Activated B cell treated with CpG ODN at 0.5 μM for 24 hours (primary cell): ENCODE measurements at regions of chr19 and their contacts with region 1.

Region 1: DNA sequence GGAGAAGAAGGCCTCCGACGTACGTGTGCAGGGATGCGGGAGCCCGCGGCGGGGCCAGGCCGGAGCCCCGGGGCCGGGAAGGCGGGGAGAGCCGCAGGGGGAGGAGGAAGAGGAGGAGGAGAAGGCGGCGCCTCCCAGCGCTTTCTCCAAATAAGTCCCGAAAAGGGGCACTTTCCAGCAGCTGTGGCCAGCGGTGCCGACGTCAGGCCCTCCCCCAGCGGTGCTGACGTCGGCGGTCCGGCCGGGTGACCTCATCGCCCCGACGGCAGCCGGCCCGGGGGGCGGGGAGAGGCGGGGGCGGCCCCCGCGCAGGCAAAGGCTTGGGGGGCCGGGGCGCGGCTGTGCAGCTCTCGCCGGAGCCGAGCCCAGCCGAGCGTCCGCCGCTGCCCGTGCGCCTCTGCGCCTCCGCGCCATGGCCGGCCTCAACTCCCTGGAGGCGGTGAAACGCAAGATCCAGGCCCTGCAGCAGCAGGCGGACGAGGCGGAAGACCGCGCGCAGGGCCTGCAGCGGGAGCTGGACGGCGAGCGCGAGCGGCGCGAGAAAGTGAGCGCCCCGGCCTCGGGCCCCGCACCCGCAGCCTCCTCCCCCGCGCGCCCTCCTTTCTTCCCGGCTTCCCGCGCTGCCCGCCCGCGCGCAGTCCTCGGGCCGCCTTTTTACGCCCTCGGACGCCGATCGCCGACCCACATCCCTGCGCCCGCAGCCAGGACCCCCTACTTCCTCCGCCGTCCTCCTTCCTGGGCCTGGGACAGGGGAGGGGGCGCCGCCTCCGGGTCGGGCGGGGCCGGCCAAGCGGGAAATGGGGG is at the start of gene TPM4:
- DNase-seq: peak; percentile 77
- ATAC-seq: peak; percentile 53
- H3K4me3 Mint-ChIP-seq: peak within 1 kb of the TSS; percentile 90
- H3K27ac Mint-ChIP-seq: peak within 1 kb of the TSS; percentile 98
- H3K4me1 Mint-ChIP-seq: peaks cover 57% of the 10 kb centered on the region
- H3K27me3 Mint-ChIP-seq: no peaks in the 10 kb centered on the region
- CTCF ChIP-seq: no peak
- total RNA-seq, gene TPM4: 238 and 257 TPM in 2 replicates

Region 2: DNA sequence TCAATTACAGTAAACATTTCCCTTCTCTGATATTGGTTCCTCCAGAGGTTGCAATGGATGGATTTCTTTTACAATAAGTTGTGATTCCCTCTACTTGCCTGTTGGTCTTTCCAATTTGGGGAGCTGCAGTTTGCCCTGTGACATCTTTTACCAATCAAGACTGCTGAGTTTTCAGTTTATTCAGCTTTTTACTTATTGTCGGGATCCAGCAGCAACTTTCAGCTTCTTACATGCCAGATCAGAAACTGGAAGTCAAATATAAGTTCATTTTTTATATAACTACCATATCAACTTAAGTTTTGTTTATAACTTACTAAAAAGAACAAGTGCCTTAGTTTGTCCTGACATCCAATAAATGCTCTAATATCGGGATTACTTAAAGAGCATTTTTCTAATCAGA is 328.1 kb before region 1 on chr19:
- CTCF ChIA-PET with region 1: no interaction called
- POLR2A ChIA-PET with region 1: no interaction called
- intact Hi-C with region 1: no loop called
- DNase-seq: no peak
- ATAC-seq: no peak
- H3K4me3 Mint-ChIP-seq: no peak overlapping the region
- H3K27ac Mint-ChIP-seq: no peak overlapping the region
- H3K4me1 Mint-ChIP-seq: no peaks in the 10 kb centered on the region
- H3K27me3 Mint-ChIP-seq: peaks cover 41% of the 10 kb centered on the region
- CTCF ChIP-seq: no peak

Region 3: DNA sequence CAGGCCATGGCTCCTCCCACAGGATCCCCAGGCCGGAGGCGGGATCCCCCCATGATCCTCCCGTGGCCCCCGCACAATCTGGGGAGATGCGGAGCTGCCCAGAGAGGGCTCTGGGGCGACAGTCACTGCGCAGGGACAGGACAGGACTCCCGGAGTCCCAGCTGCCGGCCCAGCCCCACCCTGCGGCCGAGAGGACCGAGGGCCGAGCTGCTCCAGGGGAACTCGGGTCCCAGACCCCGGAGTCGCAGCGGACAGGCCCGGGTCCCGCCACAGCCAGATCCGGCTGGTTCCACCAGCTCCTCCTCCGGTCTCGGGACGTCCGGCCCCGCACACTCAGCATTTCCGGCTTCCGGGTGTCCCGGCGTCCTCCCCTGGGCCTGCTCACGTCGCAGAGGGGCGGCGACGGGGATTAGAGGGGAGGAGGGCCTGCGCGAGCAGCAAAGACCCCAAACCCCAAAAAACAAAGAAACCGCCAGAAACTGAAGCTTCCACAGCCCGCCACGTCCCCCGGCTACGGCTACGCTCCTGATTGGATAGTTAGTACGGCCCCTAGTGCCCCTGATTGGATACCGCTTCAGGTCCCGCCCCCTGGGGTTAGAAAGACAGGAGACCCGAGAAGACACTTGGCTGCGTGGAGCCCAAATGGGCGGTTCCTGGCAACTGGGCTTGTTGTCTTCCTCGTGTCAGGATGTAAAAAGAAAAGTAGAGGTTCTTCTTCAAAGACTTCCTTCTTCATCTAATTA is 239.6 kb before region 1 on chr19:
- CTCF ChIA-PET with region 1: no interaction called
- POLR2A ChIA-PET with region 1: interaction called, 8 read pairs
- intact Hi-C with region 1: loop called (anchors 10 kb)
- DNase-seq: peak; percentile 85
- ATAC-seq: peak; percentile 95
- H3K4me3 Mint-ChIP-seq: peak overlapping the region; percentile 92
- H3K27ac Mint-ChIP-seq: peak overlapping the region; percentile 95
- H3K4me1 Mint-ChIP-seq: peaks cover 15% of the 10 kb centered on the region
- H3K27me3 Mint-ChIP-seq: peaks cover 4% of the 10 kb centered on the region
- CTCF ChIP-seq: no peak

Region 4: GRCh38 chr19:16088351-16089009 is 12.1 kb after region 1 on chr19:
- CTCF ChIA-PET with region 1: interaction called, 7 read pairs
- POLR2A ChIA-PET with region 1: interaction called, 45 read pairs
- intact Hi-C with region 1: no loop called
- DNase-seq: no peak
- ATAC-seq: no peak
- H3K4me3 Mint-ChIP-seq: no peak overlapping the region
- H3K27ac Mint-ChIP-seq: no peak overlapping the region
- H3K4me1 Mint-ChIP-seq: peaks cover 22% of the 10 kb centered on the region
- H3K27me3 Mint-ChIP-seq: no peaks in the 10 kb centered on the region
- CTCF ChIP-seq: no peak

Region 5: GRCh38 chr19:16111160-16111908 is 35.0 kb after region 1 on chr19 and contains the start of gene RAB8A:
- CTCF ChIA-PET with region 1: interaction called, 3 read pairs
- POLR2A ChIA-PET with region 1: interaction called, 88 read pairs
- intact Hi-C with region 1: loop called (anchors 1 kb)
- DNase-seq: peak; percentile 100
- ATAC-seq: peak; percentile 90
- H3K4me3 Mint-ChIP-seq: peak within 1 kb of the TSS; percentile 99
- H3K27ac Mint-ChIP-seq: peak within 1 kb of the TSS; percentile 97
- H3K4me1 Mint-ChIP-seq: peaks cover 46% of the 10 kb centered on the region
- H3K27me3 Mint-ChIP-seq: no peaks in the 10 kb centered on the region
- CTCF ChIP-seq: peak; percentile 73
- total RNA-seq, gene RAB8A: 157 and 171 TPM in 2 replicates

Region 6: GRCh38 chr19:16259385-16260159 is 183.2 kb after region 1 on chr19:
- CTCF ChIA-PET with region 1: no interaction called
- POLR2A ChIA-PET with region 1: interaction called, 11 read pairs
- intact Hi-C with region 1: no loop called
- DNase-seq: peak; percentile 78
- ATAC-seq: peak; percentile 75
- H3K4me3 Mint-ChIP-seq: peak overlapping the region; percentile 65
- H3K27ac Mint-ChIP-seq: peak overlapping the region; percentile 93
- H3K4me1 Mint-ChIP-seq: peaks cover 90% of the 10 kb centered on the region
- H3K27me3 Mint-ChIP-seq: no peaks in the 10 kb centered on the region
- CTCF ChIP-seq: no peak